ENCODE measurements at regions of chr13 and their contacts with region 1.

Region 1: DNA sequence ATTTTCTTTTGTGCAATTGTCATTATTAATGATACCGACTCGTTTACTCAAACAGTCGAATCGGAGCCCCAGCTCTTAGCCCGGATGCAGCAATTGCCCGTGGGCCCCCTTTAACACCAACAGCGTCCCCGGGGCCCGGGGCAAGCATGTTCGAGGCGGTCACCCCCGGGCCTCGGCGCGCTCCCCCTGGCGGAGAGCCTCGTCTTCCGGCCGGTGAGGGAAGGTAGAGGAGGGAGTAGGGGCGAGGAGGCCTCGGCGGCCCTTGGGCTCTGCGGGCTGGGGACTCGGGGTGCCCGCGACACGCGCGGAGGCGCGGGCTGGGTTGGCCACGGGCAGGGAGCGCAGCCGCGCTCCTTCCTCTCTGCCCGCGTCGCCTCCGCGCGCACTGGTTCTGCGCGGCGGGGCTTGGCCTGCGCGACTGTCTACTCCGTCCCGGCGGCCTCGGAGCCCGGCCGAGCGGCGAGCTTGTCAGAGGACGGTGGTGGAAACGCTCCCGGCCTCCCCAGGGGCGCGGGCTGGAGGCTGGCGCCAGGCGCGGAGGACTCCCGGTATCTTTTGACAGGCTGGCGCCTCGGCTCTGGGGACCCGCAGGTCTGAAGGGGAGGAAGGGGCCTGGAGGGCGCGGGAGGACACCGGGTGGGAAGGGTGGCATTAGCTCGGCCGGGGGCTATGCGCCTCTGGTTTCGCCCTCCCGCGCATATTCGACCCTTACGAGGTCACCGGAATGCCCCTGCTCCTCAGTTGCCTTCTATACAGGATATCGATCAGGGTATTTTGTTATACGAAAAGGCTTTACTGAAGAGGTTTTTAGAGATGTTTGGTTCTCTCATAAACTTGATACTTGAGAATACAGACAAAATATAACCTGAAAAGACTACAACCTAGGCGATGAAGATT is 1.5 kb downstream of the BIVM start:
- DNase-seq: peak; percentile 91
- CTCF ChIP-seq: peak; percentile 96

Region 2: DNA sequence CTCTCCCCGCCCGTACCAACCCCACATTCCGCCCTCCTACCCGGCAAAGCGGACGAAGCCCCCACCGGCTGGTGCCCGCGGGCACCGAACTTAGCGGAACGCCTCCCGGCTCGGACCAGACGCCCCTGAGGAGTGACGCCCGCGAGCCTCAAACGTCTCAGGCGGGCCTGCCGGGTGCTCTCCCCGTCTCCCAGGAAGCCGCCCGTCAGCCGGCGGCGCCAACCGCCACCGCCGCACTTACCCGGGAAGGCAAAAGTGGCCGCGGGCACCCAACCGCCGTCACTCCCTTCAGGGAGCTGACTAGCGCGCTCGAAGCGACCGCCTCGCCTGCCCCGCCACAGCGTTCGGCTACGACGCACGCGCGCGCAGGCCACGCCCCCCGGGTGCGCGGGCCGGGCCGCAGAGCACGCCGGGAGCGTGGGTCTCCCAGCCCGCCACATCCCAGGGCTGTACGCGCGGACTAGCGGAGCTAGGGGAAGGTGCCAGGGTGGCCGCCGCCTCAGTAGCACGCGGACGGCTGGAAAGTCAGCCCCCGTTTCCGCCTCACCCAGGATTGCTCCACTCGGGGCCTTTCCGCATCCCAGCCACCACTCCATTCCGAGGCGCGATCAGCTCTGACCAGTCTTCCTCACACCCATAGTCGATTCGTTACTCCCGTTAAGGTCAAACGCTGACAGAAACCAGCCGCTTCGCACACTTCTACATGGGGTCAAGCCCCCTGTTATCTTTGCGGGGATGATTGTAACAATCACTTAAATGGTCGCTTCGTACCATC is 26.8 kb before region 1 on chr13 and contains the start of gene TEX30:
- CTCF ChIA-PET with region 1: interaction called, 24 read pairs
- POLR2A ChIA-PET with region 1: interaction called, 3 read pairs
- DNase-seq: peak; percentile 94
- CTCF ChIP-seq: no peak

Region 3: GRCh38 chr13:102779436-102780159 is 20.8 kb before region 1 on chr13:
- CTCF ChIA-PET with region 1: interaction called, 24 read pairs
- POLR2A ChIA-PET with region 1: no interaction called
- DNase-seq: no peak
- CTCF ChIP-seq: no peak

Region 4: GRCh38 chr13:102788683-102789082 is 11.7 kb before region 1 on chr13:
- CTCF ChIA-PET with region 1: interaction called, 14 read pairs
- POLR2A ChIA-PET with region 1: no interaction called
- DNase-seq: no peak
- CTCF ChIP-seq: no peak

Region 5: DNA sequence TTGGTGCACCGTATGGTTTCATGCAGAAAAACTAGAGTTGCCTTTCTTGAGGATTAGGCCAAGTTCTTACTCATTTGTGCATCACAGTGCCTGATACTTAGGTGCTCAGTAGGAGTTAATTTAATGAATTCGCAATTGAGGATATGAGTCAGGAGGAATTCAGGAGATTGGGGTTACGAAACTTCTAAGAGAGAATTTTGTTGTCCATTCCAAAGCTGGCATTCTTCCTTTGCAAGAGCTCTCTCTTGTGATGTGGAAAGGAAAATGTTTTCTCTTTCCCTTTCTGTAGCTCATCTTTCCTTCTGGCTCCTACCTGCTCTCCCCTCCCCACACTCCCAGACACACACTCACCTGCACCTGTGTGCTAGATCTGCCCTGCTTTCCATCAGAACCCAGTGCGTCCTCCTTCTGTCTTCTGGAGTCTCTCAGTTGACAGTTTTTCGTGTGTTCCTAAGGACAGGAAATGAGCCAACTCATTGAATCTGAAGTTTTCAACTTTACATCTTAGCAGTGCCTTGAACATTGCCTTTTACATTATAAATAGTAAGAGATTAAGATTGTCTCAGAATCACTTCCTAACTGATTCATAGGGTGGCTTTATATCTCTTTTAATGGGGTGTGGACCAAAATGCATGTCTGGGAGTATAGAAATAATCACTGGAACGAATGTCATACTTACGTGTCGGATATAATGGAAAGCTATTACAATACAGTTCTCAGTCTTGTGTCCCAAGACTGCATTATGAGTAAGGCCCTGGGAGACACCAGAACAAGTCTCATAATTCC is 25.7 kb after region 1 on chr13:
- CTCF ChIA-PET with region 1: interaction called, 20 read pairs
- POLR2A ChIA-PET with region 1: interaction called, 4 read pairs
- DNase-seq: no peak
- CTCF ChIP-seq: no peak

Measured in GM10248 (cell line).